GM13977 (cell line): ENCODE measurements at regions of chr4 and their contacts with region 1.

Region 1: GRCh38 chr4:184538023-184538599 is 63.8 kb upstream of the IRF2 start:
- DNase-seq: peak; percentile 67
- CTCF ChIP-seq: peak; percentile 74

Region 2: DNA sequence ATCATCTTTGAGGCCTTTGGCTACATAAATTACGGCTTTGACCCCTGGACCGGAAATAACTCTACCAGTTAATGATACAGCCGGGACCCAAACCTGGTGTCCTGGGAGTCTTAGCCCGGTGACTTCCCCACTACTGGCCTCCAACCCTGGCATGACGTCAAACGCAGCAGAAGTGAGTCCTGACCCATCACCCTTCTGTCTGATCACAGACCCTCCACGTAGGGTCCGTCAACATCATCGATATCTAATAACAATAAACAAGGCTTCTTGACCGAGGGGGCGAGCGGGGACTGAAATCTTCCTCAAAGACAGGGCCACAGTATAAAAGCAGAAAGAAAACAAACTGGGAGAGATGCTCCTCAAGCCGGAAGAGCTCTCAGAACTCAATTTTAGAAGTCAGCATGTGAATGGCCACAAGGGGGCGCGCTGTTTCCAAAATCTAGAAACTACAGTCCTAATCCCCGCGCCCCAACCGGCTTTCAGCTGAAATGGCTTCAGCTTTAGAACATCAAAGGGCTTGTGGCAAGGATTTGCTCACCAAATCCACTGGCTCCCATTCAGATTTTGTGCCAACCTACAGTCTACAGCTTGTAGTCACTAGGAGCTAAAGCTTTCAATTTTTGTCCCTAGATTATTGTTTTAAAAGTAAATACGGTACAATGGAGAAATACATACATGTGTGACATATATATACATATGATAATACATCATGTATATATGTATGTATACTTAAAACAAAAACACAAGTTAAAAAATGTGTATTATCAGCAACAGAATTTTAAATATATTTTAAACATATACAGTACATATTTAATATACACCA is 274.0 kb before region 1 on chr4:
- in situ Hi-C with region 1: loop called (anchors 10 kb)
- DNase-seq: peak; percentile 69
- CTCF ChIP-seq: peak; percentile 74

Region 3: DNA sequence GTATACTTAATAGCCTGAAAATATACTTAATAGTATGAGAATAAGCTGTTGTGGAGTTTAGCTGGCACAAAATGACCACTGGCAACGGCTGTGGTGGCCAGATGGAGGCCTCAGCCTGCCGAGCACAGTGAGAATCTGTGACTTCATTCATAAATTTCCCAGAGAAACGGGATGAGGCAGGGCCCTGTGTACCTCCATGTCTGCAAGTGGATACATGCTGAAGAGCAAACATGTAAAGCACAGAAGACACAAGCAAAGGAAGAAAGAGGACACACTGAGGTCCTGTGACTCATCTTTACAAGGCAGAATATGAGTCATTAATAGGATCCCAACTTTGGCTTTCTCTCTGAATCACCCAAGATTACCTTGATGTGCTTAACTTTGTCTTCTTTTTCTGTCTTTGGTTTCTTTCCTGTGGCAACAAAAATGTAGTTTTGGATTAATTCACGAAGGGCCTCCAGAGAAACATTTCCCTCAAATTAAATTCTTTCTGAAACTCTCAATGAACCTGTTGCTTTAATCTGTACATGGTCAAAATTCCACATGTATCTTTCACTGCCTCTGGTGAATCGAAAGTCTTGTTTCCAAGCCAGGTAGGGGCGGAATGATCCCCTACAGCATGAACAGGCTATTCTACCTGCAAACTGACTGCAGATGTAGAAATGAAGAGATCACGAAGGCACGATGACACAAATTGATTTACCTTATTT is 120.2 kb before region 1 on chr4:
- in situ Hi-C with region 1: loop called (anchors 10 kb)
- DNase-seq: peak; percentile 66
- CTCF ChIP-seq: no peak

Region 4: GRCh38 chr4:184474263-184475095 is 63.6 kb before region 1 on chr4 and contains the start of gene IRF2:
- in situ Hi-C with region 1: loop called (anchors 10 kb)
- DNase-seq: peak; percentile 98
- CTCF ChIP-seq: no peak

Region 5: DNA sequence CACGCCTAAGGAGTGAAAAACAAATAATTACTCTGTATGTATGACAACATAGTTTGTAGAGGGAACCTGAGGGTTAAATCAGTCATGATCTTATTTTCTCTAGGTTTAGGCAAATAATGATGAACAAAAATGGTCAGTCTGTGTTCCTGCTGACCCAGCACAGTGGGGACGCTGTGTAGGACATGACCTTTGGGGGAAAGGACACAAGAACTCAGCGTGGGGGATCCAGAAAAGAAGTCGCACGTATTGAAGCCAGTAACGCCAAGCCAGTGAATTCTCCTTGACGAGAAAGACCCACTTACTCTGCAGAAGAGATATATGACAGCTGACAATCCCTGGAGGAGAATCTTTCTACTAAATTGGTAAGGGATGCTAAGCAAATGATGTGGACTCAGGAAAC is 516.8 kb after region 1 on chr4:
- in situ Hi-C with region 1: no loop called
- DNase-seq: no peak
- CTCF ChIP-seq: no peak